MCF 10A (cell line): ENCODE measurements at regions of chr1 and their contacts with region 1.

Region 1: DNA sequence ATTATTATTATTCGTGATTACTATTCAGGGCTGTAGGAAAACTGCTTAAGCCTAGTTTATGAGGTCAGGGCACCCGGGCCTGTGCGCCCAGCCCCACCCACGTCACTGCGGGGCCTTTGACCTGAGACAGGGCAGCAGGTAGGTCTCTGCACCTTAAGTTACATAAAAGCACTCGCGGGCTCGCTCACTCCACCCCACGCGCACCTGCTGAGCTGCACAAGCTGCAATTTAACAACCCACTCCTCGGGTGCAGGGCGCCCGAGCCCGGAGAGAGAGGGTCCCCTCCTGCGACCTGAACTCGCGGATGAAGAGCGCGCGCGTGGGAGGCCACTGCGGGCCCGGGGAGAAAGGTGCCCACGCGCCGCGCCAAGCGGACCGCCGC is 477 bp downstream of the ICMT start:
- DNase-seq: no peak
- H3K4me3 Mint-ChIP-seq: peak overlapping the region; percentile 77
- H3K27ac Mint-ChIP-seq: no peak overlapping the region
- H3K4me1 Mint-ChIP-seq: peaks cover 10% of the 10 kb centered on the region
- H3K27me3 Mint-ChIP-seq: no peaks in the 10 kb centered on the region
- CTCF ChIP-seq: no peak

Region 2: DNA sequence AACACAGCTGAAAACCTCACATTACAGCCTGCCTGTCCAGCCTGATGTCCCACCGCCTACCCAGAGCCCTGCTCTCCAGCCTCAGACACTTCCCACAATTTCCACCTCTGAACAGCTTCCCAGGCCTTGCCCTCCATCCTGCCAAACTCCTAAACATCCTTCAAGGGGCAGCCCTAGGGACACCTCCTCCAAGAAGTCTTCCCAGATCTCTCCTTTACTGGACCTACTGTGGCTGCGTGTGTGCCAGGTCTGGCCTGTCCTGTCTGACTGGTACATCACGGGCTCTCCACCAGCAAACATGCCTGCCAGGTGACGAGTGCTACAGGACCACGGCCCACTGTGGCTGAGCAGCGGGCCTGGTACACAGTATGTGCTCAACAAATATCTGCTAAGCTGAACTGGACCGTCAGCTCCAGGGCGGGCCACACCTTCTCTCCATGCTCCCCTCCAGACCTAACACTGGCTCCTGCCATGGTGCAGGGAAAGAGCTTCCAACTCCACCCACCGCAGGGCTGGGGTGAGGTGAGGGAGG is 83.9 kb before region 1 on chr1:
- CTCF ChIA-PET with region 1: no interaction called
- POLR2A ChIA-PET with region 1: no interaction called
- intact Hi-C with region 1: no loop called
- DNase-seq: no peak
- H3K4me3 Mint-ChIP-seq: no peak overlapping the region
- H3K27ac Mint-ChIP-seq: no peak overlapping the region
- H3K4me1 Mint-ChIP-seq: peaks cover 1% of the 10 kb centered on the region
- H3K27me3 Mint-ChIP-seq: peaks cover 10% of the 10 kb centered on the region
- CTCF ChIP-seq: no peak

Region 3: DNA sequence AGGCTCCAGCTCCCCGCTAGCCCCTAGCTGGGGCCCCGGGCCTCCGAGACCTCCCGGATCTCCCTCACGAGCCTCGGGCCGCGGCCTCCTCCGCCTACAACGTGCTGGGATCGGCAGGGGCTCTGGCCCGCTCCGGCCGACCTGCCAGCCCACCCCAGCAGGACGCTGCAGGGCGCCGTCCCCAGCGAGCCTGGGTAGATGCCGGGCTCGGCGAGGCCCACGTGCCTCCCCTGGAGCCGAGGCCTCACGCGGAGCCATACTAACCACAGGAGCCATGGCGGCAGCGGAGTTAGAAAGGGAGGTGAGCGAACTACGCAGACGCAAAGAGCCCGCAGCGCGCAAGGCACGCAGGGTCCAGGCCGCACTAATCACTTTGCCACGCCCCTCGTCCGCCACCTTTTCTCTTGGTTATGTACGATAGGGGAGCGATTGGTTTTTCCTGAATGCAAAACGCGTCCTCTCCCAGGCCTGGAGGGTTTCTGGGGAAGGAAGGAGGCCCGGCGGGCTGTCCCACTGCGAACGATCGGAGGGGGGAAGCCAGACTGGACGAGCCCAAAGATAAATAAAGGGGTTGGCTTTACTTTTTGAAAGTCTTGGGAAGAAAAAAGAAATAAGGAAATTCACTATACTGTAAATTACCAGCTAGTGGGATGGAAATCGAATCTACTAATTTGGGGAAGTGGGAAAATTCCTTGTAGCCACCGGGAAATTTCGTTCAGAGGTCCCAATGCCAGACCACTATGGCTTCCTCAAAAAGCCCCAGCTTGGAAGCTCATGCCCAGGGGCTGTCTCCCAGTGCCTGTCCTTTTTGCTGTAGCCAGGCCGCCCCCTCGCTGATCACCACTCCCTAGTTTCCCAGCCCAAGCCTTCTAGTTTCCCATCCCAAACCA is 35.7 kb before region 1 on chr1 and contains the start of gene RPL22:
- CTCF ChIA-PET with region 1: interaction called, 6 read pairs
- POLR2A ChIA-PET with region 1: interaction called, 42 read pairs
- intact Hi-C with region 1: no loop called
- DNase-seq: peak; percentile 100
- H3K4me3 Mint-ChIP-seq: peak within 1 kb of the TSS; percentile 87
- H3K27ac Mint-ChIP-seq: peak within 1 kb of the TSS; percentile 97
- H3K4me1 Mint-ChIP-seq: peaks cover 25% of the 10 kb centered on the region
- H3K27me3 Mint-ChIP-seq: no peaks in the 10 kb centered on the region
- CTCF ChIP-seq: no peak
- total RNA-seq, gene RPL22: 477 and 513 TPM in 2 replicates

Region 4: GRCh38 chr1:6205849-6206519 is 29.3 kb before region 1 on chr1 and contains the start of gene RNF207:
- CTCF ChIA-PET with region 1: interaction called, 3 read pairs
- POLR2A ChIA-PET with region 1: interaction called, 10 read pairs
- intact Hi-C with region 1: no loop called
- DNase-seq: peak; percentile 72
- H3K4me3 Mint-ChIP-seq: peak within 1 kb of the TSS; percentile 71
- H3K27ac Mint-ChIP-seq: no peak within 1 kb of the TSS
- H3K4me1 Mint-ChIP-seq: no peaks in the 10 kb centered on the region
- H3K27me3 Mint-ChIP-seq: no peaks in the 10 kb centered on the region
- CTCF ChIP-seq: no peak
- total RNA-seq, gene RNF207: 6.2 and 12.4 TPM in 2 replicates

Region 5: DNA sequence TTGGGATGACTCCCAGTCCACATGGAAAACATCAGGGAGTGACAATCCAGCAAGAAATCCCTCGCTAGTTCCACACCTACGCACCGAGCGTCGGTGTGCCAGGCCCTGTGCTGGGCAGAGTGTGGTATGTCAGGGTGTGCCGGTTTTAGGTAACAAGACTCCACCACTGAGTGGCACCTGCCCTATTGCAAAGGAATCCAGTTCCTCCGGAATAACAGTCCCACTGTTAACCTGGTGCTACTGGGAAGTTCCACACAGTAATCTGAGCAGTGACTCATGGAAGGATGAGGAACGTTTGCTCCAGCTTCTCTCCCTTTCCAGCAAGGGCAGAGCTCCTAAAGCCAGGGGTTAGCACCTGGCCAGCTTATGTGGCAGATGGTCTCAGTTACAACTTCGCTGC is 15.0 kb before region 1 on chr1:
- CTCF ChIA-PET with region 1: interaction called, 6 read pairs
- POLR2A ChIA-PET with region 1: interaction called, 18 read pairs
- intact Hi-C with region 1: no loop called
- DNase-seq: peak; percentile 84
- H3K4me3 Mint-ChIP-seq: no peak overlapping the region
- H3K27ac Mint-ChIP-seq: peak overlapping the region; percentile 85
- H3K4me1 Mint-ChIP-seq: peaks cover 9% of the 10 kb centered on the region
- H3K27me3 Mint-ChIP-seq: no peaks in the 10 kb centered on the region
- CTCF ChIP-seq: no peak